MCF 10A (cell line): ENCODE measurements at regions of chr18 and their contacts with region 1.

Region 1: GRCh38 chr18:9575558-9575957 is 38.8 kb downstream of the PPP4R1 start:
- DNase-seq: peak; percentile 97
- H3K4me3 Mint-ChIP-seq: no peak overlapping the region
- H3K27ac Mint-ChIP-seq: no peak overlapping the region
- H3K4me1 Mint-ChIP-seq: peaks cover 35% of the 10 kb centered on the region
- H3K27me3 Mint-ChIP-seq: no peaks in the 10 kb centered on the region
- CTCF ChIP-seq: peak; percentile 86

Region 2: GRCh38 chr18:9587924-9588323 is 12.4 kb after region 1 on chr18:
- CTCF ChIA-PET with region 1: interaction called, 4 read pairs
- POLR2A ChIA-PET with region 1: interaction called, 16 read pairs
- intact Hi-C with region 1: no loop called
- DNase-seq: no peak
- H3K4me3 Mint-ChIP-seq: no peak overlapping the region
- H3K27ac Mint-ChIP-seq: no peak overlapping the region
- H3K4me1 Mint-ChIP-seq: no peaks in the 10 kb centered on the region
- H3K27me3 Mint-ChIP-seq: no peaks in the 10 kb centered on the region
- CTCF ChIP-seq: no peak

Region 3: GRCh38 chr18:9608298-9608697 is 32.7 kb after region 1 on chr18:
- CTCF ChIA-PET with region 1: interaction called, 17 read pairs
- POLR2A ChIA-PET with region 1: interaction called, 30 read pairs
- intact Hi-C with region 1: loop called (anchors 1 kb)
- DNase-seq: no peak
- H3K4me3 Mint-ChIP-seq: no peak overlapping the region
- H3K27ac Mint-ChIP-seq: peak overlapping the region; percentile 88
- H3K4me1 Mint-ChIP-seq: peaks cover 47% of the 10 kb centered on the region
- H3K27me3 Mint-ChIP-seq: no peaks in the 10 kb centered on the region
- CTCF ChIP-seq: no peak

Region 4: GRCh38 chr18:9661564-9661963 is 86.0 kb after region 1 on chr18:
- CTCF ChIA-PET with region 1: interaction called, 20 read pairs
- POLR2A ChIA-PET with region 1: interaction called, 3 read pairs
- intact Hi-C with region 1: no loop called
- DNase-seq: peak; percentile 36
- H3K4me3 Mint-ChIP-seq: no peak overlapping the region
- H3K27ac Mint-ChIP-seq: no peak overlapping the region
- H3K4me1 Mint-ChIP-seq: peaks cover 16% of the 10 kb centered on the region
- H3K27me3 Mint-ChIP-seq: no peaks in the 10 kb centered on the region
- CTCF ChIP-seq: peak; percentile 27

Region 5: GRCh38 chr18:9683407-9684396 is 108.1 kb after region 1 on chr18:
- CTCF ChIA-PET with region 1: interaction called, 30 read pairs
- POLR2A ChIA-PET with region 1: interaction called, 6 read pairs
- intact Hi-C with region 1: no loop called
- DNase-seq: peak; percentile 84
- H3K4me3 Mint-ChIP-seq: no peak overlapping the region
- H3K27ac Mint-ChIP-seq: no peak overlapping the region
- H3K4me1 Mint-ChIP-seq: peaks cover 11% of the 10 kb centered on the region
- H3K27me3 Mint-ChIP-seq: no peaks in the 10 kb centered on the region
- CTCF ChIP-seq: peak; percentile 48

Region 6: GRCh38 chr18:9771261-9771976 is 195.9 kb after region 1 on chr18:
- CTCF ChIA-PET with region 1: interaction called, 6 read pairs
- POLR2A ChIA-PET with region 1: no interaction called
- intact Hi-C with region 1: loop called (anchors 10 kb)
- DNase-seq: peak; percentile 74
- H3K4me3 Mint-ChIP-seq: no peak overlapping the region
- H3K27ac Mint-ChIP-seq: no peak overlapping the region
- H3K4me1 Mint-ChIP-seq: peaks cover 6% of the 10 kb centered on the region
- H3K27me3 Mint-ChIP-seq: no peaks in the 10 kb centered on the region
- CTCF ChIP-seq: peak; percentile 96

Region 7: DNA sequence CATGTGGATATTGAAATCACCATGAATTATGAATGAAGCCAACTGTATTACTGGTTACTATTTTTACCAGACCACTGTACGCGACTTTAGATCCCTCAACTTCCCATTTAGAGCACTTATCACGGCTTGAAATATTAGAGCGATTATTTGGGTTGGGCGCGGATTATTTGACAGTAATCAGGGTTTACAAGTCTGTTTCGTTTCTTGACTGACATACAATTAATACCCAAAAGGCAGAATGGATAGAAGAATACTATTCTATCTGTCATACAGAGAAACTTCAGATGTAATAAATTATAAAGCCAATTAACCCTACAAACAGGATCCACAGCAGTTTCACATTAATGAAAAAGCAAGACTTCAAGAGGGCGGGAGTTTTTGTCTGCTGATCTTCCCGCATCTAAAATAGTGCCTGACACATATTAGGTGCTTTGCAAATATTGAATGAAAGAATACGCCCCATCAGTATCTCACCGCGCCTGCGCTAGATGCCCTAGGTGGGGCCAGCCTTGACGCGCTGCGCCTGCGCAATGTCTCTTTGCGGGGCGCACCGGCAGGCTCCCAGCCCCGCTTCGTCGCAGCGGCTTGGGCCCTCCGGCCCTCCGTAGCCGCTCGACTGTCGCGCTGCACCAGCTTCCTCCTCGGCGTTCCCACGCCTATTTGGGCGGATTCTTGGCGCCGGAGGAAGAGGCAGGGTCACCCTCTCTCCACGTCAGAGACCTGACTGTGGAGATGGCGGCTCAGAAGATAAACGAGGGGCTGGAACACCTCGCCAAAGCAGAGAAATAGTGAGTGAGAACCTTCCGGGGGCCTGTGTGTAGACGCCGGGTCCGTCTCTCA is 950.0 kb after region 1 on chr18 and contains the start of gene NAPG:
- CTCF ChIA-PET with region 1: no interaction called
- POLR2A ChIA-PET with region 1: no interaction called
- intact Hi-C with region 1: loop called (anchors 10 kb)
- DNase-seq: peak; percentile 89
- H3K4me3 Mint-ChIP-seq: peak within 1 kb of the TSS; percentile 91
- H3K27ac Mint-ChIP-seq: peak within 1 kb of the TSS; percentile 95
- H3K4me1 Mint-ChIP-seq: peaks cover 24% of the 10 kb centered on the region
- H3K27me3 Mint-ChIP-seq: no peaks in the 10 kb centered on the region
- CTCF ChIP-seq: no peak
- total RNA-seq, gene NAPG: 31.8 and 32.2 TPM in 2 replicates